Activated naive CD4-positive, alpha-beta T cell treated with anti-CD3 and anti-CD28 coated beads for 36 hours (primary cell): ENCODE measurements at regions of chr4 and their contacts with region 1.

Region 1: GRCh38 chr4:75995727-75996126 is 5.0 kb upstream of the SDAD1 start:
- DNase-seq: peak; percentile 16
- H3K4me3 Mint-ChIP-seq: no peak overlapping the region
- H3K27ac Mint-ChIP-seq: no peak overlapping the region
- H3K4me1 Mint-ChIP-seq: peaks cover 6% of the 10 kb centered on the region
- H3K27me3 Mint-ChIP-seq: peaks cover 2% of the 10 kb centered on the region

Region 2: DNA sequence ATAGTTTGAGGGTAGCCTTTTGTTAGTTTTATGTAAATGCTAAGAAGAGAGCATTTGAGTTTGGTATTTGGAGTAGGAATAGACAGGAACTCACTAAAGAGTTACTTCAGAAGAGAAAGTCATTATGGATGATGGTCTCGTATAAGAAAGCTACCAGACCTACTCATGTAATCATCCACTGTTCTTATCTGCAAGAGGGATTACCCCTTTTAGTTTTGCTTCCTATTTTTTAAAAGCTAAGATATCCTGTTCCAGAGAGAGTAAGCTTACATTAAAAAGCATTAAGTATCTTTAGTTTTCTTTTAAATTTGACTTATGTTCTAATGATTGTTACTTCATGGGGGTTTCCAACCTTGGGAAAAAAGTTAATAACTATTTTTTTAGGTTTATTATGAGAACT is 66.3 kb after region 1 on chr4:
- CTCF ChIA-PET with region 1: interaction called, 117 read pairs
- intact Hi-C with region 1: loop called (anchors 1 kb)
- DNase-seq: no peak
- H3K4me3 Mint-ChIP-seq: no peak overlapping the region
- H3K27ac Mint-ChIP-seq: no peak overlapping the region
- H3K4me1 Mint-ChIP-seq: peaks cover 42% of the 10 kb centered on the region
- H3K27me3 Mint-ChIP-seq: peaks cover 23% of the 10 kb centered on the region

Region 3: DNA sequence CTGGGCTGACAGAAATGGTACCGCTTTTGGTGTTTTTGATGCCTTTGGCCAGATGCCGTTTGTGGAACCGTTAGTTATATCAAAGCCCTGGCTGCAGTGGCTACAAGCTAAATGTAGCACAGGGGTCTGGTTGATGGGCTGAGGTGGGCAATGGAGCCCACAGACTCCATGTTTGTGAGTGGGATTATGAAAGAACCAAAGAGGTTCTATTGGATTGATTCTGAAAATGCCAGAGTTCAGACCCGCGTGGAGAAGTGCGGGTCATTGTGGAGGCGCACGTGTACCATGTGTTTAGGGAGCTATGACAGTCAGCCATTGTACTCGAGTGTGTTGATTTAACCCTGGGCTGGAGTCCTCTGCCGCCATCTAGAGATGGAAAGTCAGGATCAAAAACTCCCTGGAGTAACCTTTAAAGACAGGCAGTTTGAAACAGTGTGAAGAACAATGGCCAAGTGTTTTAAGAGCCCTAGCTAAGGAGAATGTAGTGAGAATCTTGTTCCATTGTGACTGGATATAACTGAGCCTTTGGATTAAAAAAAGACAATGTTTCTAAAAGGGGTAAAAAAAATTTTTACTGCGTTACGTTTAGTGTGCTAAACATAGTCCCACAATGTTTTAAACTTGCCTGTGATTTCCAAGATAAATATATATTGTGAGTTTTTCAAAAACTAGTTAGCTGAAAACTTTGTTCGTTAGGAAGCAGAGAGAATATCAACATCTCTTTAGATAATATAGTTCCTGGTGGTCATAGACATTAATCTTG is 91.5 kb after region 1 on chr4:
- CTCF ChIA-PET with region 1: interaction called, 18 read pairs
- intact Hi-C with region 1: loop called (anchors 1 kb)
- DNase-seq: peak; percentile 50
- H3K4me3 Mint-ChIP-seq: no peak overlapping the region
- H3K27ac Mint-ChIP-seq: no peak overlapping the region
- H3K4me1 Mint-ChIP-seq: peaks cover 4% of the 10 kb centered on the region
- H3K27me3 Mint-ChIP-seq: no peaks in the 10 kb centered on the region

Region 4: GRCh38 chr4:76377911-76378310 is 382.2 kb after region 1 on chr4:
- CTCF ChIA-PET with region 1: interaction called, 3 read pairs
- intact Hi-C with region 1: loop called (anchors 1 kb)
- DNase-seq: peak; percentile 66
- H3K4me3 Mint-ChIP-seq: no peak overlapping the region
- H3K27ac Mint-ChIP-seq: no peak overlapping the region
- H3K4me1 Mint-ChIP-seq: no peaks in the 10 kb centered on the region
- H3K27me3 Mint-ChIP-seq: no peaks in the 10 kb centered on the region